ENCODE measurements at regions of chrX and their contacts with region 1.

Region 1: DNA sequence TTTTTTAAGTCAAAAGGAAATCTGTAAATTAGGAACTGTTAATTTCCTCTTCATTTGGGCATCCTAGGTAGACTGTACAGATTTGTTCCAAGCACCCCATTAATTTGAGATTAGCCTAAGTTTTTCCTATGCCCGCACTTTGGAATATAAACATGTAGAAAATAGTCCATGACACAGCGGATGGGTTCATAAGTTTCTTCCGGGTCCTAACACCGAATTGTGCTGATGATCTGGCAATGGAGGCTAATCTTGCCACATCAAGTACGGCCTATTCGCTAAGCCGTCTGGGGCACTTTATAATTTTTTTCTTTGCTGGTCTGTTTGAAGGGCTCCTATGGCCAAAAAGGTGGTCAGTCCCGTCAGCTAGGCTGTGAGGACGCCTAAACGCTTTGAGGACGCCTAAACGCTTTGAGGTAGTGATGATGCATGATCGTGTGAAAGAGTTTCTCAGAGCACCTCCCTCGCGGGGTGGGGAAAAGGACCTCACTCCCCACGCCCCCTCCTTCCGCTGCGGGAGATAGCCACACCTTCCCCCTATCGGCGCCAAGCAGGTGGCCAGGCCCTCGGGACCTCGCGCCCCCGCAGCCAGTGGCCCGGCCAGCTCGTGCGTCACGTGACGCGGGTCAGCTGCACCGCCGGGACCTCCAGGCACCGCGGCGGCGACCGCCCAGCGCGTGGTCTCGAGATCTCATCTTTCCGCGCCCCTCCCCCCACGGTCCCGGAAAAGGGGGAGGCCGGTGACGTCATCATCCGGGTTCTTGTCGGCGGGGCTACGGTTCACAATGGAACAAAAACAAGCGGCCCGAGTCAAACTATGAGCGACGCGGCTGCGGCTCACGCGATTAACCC is 977 bp upstream of the USP9X start:
- DNase-seq: peak; percentile 96
- ATAC-seq: peak; percentile 63
- H3K4me3 ChIP-seq: peak overlapping the region; percentile 46 to 93 (median 75)
- H3K4me3 Mint-ChIP-seq: peak overlapping the region; percentile 94
- H3K27ac ChIP-seq: peak overlapping the region; percentile 100
- H3K27ac Mint-ChIP-seq: peak overlapping the region; percentile 100
- H3K4me1 ChIP-seq: peaks cover 25 to 33% of the 10 kb centered on the region in 2 donors
- H3K4me1 Mint-ChIP-seq: peaks cover 30% of the 10 kb centered on the region
- H3K27me3 ChIP-seq: no peaks in the 10 kb centered on the region
- H3K27me3 Mint-ChIP-seq: no peaks in the 10 kb centered on the region
- CTCF ChIP-seq: no peak

Region 2: GRCh38 chrX:39859991-39860861 is 1224.0 kb before region 1 on chrX:
- CTCF ChIA-PET with region 1: no interaction called
- POLR2A ChIA-PET with region 1: no interaction called
- intact Hi-C with region 1: loop called (anchors 10 kb)
- DNase-seq: peak; percentile 18
- ATAC-seq: peak; percentile 54
- H3K4me3 ChIP-seq: no peak overlapping the region
- H3K4me3 Mint-ChIP-seq: peak overlapping the region; percentile 50
- H3K27ac ChIP-seq: no peak overlapping the region
- H3K27ac Mint-ChIP-seq: peak overlapping the region; percentile 82
- H3K4me1 ChIP-seq: peaks cover 14 to 22% of the 10 kb centered on the region in 2 donors
- H3K4me1 Mint-ChIP-seq: peaks cover 30% of the 10 kb centered on the region
- H3K27me3 ChIP-seq: no peaks in the 10 kb centered on the region
- H3K27me3 Mint-ChIP-seq: no peaks in the 10 kb centered on the region
- CTCF ChIP-seq: no peak

Region 3: DNA sequence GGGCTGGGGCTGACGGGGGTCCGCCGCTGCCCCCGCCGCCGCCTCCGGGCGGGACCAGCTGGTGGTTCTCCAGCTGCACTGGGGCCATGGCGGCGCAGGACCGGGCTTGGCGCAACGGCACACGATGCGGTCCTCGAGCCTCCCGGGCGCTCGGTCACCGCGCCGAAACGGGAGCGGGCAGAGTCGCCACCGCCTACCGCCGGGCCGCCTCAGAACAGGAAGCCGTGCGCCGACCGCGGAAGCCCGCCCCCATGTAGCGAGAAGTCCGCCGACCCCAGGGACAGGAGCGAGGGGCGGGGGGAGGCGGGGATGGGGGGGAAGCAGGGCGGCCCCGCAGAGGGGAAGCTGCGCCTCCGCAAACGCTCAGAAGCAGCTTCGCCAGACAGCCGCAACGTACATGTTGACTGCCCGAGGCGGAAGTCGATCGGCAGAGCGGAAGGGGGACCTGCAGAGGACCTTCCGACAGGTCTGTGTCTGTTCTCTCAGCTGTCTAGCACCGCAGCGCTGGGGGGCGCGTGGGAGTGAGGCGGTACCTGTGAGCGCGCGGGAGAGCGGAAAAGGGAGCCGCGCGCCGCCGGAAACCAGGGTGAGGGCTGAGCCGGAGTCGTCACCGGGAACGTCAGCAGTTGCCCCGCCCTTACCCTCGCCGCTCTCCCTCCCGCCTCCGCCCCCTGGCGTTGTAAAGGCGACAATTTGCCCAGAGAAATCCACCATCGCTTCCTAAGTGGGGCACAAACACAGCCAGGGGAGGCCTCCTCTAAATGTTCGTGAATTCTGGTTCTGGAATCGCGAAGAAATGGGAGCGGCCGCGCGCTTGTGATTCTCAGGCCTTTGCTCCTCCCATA is 348.7 kb before region 1 on chrX and contains the start of gene MED14:
- CTCF ChIA-PET with region 1: interaction called, 4 read pairs
- POLR2A ChIA-PET with region 1: interaction called, 8 read pairs
- intact Hi-C with region 1: loop called (anchors 1 kb)
- DNase-seq: peak; percentile 94
- ATAC-seq: peak; percentile 84
- H3K4me3 ChIP-seq: peak within 1 kb of the TSS; percentile 64 to 93 (median 82)
- H3K4me3 Mint-ChIP-seq: peak within 1 kb of the TSS; percentile 91
- H3K27ac ChIP-seq: peak within 1 kb of the TSS; percentile 91 to 98
- H3K27ac Mint-ChIP-seq: peak within 1 kb of the TSS; percentile 98
- H3K4me1 ChIP-seq: peaks cover 25 to 31% of the 10 kb centered on the region in 2 donors
- H3K4me1 Mint-ChIP-seq: peaks cover 34% of the 10 kb centered on the region
- H3K27me3 ChIP-seq: peaks cover 0 to 2% (median 0%) of the 10 kb centered on the region in 4 experiments
- H3K27me3 Mint-ChIP-seq: no peaks in the 10 kb centered on the region
- CTCF ChIP-seq: peak; percentile 56
- total RNA-seq, gene MED14: 63.5 and 67.1 TPM in 2 replicates

Region 4: DNA sequence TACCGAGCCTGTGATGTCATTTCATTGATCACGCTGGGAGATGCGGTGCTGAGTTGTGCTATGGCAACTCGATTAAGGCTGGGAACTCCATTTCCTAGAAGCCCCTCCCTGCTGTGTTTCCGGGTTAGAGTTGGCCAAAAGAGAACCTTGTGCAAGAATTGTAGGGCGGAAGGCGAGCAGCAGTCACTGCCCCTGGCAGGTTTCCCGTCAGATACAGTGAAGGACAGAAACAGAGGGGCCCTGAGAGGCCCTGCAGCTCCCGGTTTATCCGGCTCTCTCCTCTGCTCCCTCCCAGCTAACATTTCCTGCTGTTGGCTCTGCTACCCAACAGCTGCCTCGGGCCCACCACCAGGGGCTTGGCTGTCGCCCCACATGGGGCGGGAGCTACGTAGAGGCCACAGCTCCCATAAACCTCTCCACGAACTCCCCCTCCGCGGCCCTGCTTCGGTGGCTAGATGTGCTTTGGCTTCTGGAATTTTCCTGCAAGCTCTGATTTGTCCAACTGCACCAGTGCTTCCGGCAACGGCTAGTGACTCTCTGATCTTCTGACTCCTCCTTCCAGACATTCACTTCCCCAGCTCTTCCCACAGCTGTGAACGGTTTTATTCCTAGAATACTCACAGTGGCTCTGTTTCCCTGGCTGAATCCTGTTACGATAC is 74.0 kb before region 1 on chrX:
- CTCF ChIA-PET with region 1: no interaction called
- POLR2A ChIA-PET with region 1: interaction called, 4 read pairs
- intact Hi-C with region 1: loop called (anchors 2 kb)
- DNase-seq: peak; percentile 65
- ATAC-seq: peak; percentile 67
- H3K4me3 ChIP-seq: peak overlapping the region; percentile 13 to 53 (median 31)
- H3K4me3 Mint-ChIP-seq: peak overlapping the region; percentile 82
- H3K27ac ChIP-seq: peak overlapping the region in 1 of 2 donors; percentile 16
- H3K27ac Mint-ChIP-seq: peak overlapping the region; percentile 73
- H3K4me1 ChIP-seq: peaks cover 7 to 11% of the 10 kb centered on the region in 2 donors
- H3K4me1 Mint-ChIP-seq: peaks cover 16% of the 10 kb centered on the region
- H3K27me3 ChIP-seq: peaks cover 0 to 7% (median 3%) of the 10 kb centered on the region in 4 experiments
- H3K27me3 Mint-ChIP-seq: peaks cover 16% of the 10 kb centered on the region
- CTCF ChIP-seq: no peak

Region 5: GRCh38 chrX:41441934-41442823 is 357.9 kb after region 1 on chrX:
- CTCF ChIA-PET with region 1: no interaction called
- POLR2A ChIA-PET with region 1: no interaction called
- intact Hi-C with region 1: loop called (anchors 10 kb)
- DNase-seq: peak; percentile 89
- ATAC-seq: peak; percentile 92
- H3K4me3 ChIP-seq: peak overlapping the region in 4 of 5 experiments; percentile 23 to 58 (median 52)
- H3K4me3 Mint-ChIP-seq: peak overlapping the region; percentile 79
- H3K27ac ChIP-seq: peak overlapping the region; percentile 6 to 49
- H3K27ac Mint-ChIP-seq: peak overlapping the region; percentile 50
- H3K4me1 ChIP-seq: peaks cover 17 to 28% of the 10 kb centered on the region in 2 donors
- H3K4me1 Mint-ChIP-seq: peaks cover 23% of the 10 kb centered on the region
- H3K27me3 ChIP-seq: no peaks in the 10 kb centered on the region
- H3K27me3 Mint-ChIP-seq: no peaks in the 10 kb centered on the region
- CTCF ChIP-seq: peak; percentile 61